Endothelial cell of umbilical vein (primary cell): ENCODE measurements at regions of chr19 and their contacts with region 1.

Region 1: DNA sequence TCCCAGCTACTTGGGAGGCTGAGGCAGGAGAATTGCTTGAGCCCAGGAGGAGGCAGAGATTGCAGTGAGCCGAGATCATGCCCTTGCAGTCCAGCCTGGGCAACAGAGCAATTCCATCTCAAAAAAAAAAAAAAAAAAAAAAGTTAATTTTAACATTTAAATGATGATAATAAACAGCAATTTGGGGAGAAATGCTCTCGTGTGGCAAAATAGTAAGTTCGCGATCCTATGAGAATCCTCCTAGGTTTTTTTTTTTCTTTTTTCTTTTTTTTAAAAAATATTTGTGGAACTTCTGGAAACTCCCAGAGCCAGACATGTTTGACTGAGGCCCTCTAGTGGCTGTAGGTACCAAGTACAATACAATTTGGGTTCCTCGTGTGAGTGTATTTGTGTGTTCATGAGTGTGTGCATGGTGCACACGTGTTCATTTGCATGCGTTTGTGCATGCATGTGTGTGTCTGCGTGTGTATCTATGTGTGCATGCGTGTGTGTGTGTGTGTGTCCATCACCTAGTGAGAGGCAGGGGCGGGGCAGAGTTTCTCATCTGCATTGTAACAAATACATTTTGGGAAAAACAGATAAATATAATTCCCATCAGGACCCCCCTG is 31.2 kb downstream of the TMPRSS9 start:
- DNase-seq: peak; percentile 73
- H3K4me3 ChIP-seq: no peak overlapping the region
- H3K27ac ChIP-seq: no peak overlapping the region
- H3K4me1 ChIP-seq: no peaks in the 10 kb centered on the region
- H3K27me3 ChIP-seq: peaks cover 3 to 4% of the 10 kb centered on the region in 2 experiments
- CTCF ChIP-seq: peak; percentile 60 to 67
- POLR2A ChIP-seq: no peak

Region 2: GRCh38 chr19:2161688-2162053 is 229.6 kb before region 1 on chr19:
- CTCF ChIA-PET with region 1: interaction called, 4 read pairs
- POLR2A ChIA-PET with region 1: no interaction called
- dilution Hi-C with region 1: no loop called
- intact Hi-C with region 1: loop called (anchors 2 kb)
- DNase-seq: peak; percentile 16
- H3K4me3 ChIP-seq: no peak overlapping the region
- H3K27ac ChIP-seq: peak overlapping the region; percentile 32
- H3K4me1 ChIP-seq: peaks cover 6% of the 10 kb centered on the region
- H3K27me3 ChIP-seq: no peaks in the 10 kb centered on the region
- CTCF ChIP-seq: no peak
- POLR2A ChIP-seq: no peak

Region 3: GRCh38 chr19:2274931-2275535 is 116.2 kb before region 1 on chr19:
- CTCF ChIA-PET with region 1: interaction called, 3 read pairs
- POLR2A ChIA-PET with region 1: no interaction called
- dilution Hi-C with region 1: no loop called
- intact Hi-C with region 1: loop called (anchors 1 kb)
- DNase-seq: peak; percentile 60
- H3K4me3 ChIP-seq: no peak overlapping the region
- H3K27ac ChIP-seq: no peak overlapping the region
- H3K4me1 ChIP-seq: peaks cover 27% of the 10 kb centered on the region
- H3K27me3 ChIP-seq: no peaks in the 10 kb centered on the region
- CTCF ChIP-seq: peak; percentile 43 to 56
- POLR2A ChIP-seq: no peak